Ascending aorta (tissue), 2 donors: ENCODE measurements at regions of chr19 and their contacts with region 1.

Region 1: GRCh38 chr19:47243776-47244547 is 12.4 kb upstream of the CCDC9 start:
- DNase-seq: peak in 1 of 2 donors; percentile 97
- H3K4me3 ChIP-seq: peak overlapping the region; percentile 45 to 58
- H3K27ac ChIP-seq: peak overlapping the region; percentile 58 to 64
- H3K4me1 ChIP-seq: peaks cover 27 to 35% of the 10 kb centered on the region in 2 donors
- H3K27me3 ChIP-seq: no peaks in the 10 kb centered on the region
- CTCF ChIP-seq: peak; percentile 98 to 100 (median 99)

Region 2: DNA sequence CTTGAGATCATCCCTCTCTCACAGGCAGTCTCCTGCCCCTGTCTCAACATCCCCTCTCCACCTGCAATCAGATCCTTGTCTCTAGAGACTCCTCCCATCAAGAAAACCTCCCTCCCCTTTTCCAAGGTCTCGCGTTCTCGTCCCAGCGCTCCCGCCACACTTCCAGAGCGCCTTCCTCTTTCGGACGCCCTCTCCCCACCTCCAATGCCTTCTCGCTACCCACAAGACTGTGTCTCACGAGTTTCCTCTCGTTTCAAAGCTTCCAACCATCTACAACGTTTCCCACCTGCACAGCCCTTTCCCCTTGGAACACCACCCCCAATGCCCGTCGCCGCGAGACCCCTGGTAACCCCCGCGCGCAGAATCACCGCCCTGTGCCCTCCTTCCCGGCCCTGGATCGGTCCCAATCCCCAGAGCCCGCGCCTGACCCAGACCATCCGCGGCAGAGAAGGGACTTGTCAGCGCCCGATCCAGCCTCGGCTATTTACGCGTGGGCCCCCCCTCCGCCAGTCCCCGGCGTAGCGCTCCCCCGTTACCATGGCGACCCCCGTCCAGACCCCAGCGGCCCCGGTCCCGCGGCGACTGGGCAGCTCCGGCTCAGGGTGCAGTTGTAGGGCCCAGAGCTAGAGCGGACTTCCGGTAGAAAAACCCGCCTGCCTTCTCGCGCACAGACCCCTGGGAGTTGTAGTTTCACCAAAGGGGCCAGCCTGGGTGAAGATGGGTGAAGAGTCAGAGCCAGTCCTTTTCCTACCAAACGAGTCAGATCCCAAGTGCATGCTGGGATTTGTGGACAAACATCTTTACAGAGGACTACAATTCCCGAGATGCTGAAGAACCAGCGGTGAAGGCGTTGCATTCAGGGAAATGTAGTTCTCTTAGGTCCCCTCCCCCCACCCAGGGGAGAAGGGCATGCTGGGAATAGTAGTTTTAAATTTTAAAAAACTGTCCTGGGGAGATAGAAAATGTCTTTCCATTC is 393.4 kb before region 1 on chr19 and contains the start of gene AP2S1:
- intact Hi-C with region 1: loop called (anchors 5 kb)
- DNase-seq: peak; percentile 94 to 99
- H3K4me3 ChIP-seq: peak within 1 kb of the TSS; percentile 81 to 93
- H3K27ac ChIP-seq: peak within 1 kb of the TSS; percentile 85 to 89
- H3K4me1 ChIP-seq: peaks cover 5 to 16% of the 10 kb centered on the region in 2 donors
- H3K27me3 ChIP-seq: no peaks in the 10 kb centered on the region
- CTCF ChIP-seq: no peak
- total RNA-seq, gene AP2S1: 96.6 TPM

Region 3: GRCh38 chr19:47152224-47153017 is 91.5 kb before region 1 on chr19:
- intact Hi-C with region 1: loop called (anchors 1 kb)
- DNase-seq: no peak
- H3K4me3 ChIP-seq: no peak overlapping the region
- H3K27ac ChIP-seq: no peak overlapping the region
- H3K4me1 ChIP-seq: peaks cover under 1 to 6% of the 10 kb centered on the region in 2 donors
- H3K27me3 ChIP-seq: no peaks in the 10 kb centered on the region
- CTCF ChIP-seq: no peak

Region 4: DNA sequence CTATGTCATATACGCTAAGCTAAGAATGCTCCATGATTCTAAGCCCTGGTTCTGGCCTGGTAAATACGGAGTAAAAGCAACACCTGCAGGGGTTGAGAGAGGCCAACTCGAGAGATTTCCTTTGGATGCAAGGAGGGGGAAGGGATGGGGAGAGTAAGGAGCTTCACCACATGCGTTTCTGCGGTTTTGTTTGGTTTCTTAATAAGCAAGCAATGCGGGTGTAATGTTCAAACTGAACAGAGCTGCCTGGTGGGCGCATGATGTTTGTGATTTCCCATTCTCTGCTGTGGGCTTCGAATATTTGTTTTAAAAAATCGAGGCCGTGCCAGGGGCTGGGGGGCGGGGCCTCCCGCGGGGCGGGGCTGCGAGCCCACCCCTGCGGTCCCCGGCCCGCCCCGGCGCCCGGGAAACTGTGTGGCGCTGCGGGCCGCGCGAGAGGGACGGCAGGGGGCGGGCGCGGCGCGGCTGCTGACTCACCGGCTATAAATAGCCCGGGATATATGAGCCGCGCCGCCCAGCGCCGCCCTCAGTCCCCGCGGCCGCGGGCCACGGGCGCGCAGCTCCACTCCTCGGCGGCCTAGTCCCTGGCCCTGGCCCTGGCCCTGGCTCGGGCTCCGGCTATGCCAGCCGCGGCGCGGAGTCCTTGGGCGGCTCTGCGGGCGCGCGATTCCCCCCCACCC is 18.1 kb before region 1 on chr19:
- intact Hi-C with region 1: loop called (anchors 1 kb)
- DNase-seq: peak in 1 of 2 donors; percentile 92
- H3K4me3 ChIP-seq: peak overlapping the region; percentile 88 to 91
- H3K27ac ChIP-seq: peak overlapping the region; percentile 100
- H3K4me1 ChIP-seq: peaks cover 12 to 24% of the 10 kb centered on the region in 2 donors
- H3K27me3 ChIP-seq: no peaks in the 10 kb centered on the region
- CTCF ChIP-seq: peak in 2 of 3 experiments; percentile 19 to 77